Colonic mucosa (tissue), 4 donors: ENCODE measurements at regions of chr12 and their contacts with region 1.

Region 1: DNA sequence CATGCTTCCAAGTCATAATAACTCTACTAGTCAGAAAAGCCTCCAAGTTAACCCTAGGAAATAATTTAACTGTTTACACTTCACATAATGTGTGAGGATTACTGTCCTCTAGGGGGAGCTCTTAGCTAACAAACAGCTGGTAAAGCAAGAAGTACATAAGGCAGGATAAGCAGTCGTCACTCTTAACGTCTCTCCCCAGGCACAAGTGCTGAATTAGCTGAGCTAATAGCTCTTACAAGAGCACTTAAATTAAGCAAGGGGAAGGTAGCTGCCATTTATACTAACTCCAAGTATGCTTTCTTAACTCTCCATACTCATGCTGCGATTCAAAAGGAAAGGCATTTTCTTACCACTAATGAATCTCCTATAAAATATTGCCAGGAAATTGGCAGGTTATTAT is 79.3 kb upstream of the TSPAN11 start:
- DNase-seq: peak; percentile 36
- H3K4me3 ChIP-seq: no peak overlapping the region
- H3K27ac ChIP-seq: no peak overlapping the region
- H3K4me1 ChIP-seq: no peaks in the 10 kb centered on the region
- H3K27me3 ChIP-seq: no peaks in the 10 kb centered on the region
- CTCF ChIP-seq: peak; percentile 60

Region 2: GRCh38 chr12:30965613-30965985 is 118.3 kb after region 1 on chr12:
- intact Hi-C with region 1: no loop called
- DNase-seq: no peak
- H3K4me3 ChIP-seq: no peak overlapping the region
- H3K27ac ChIP-seq: no peak overlapping the region
- H3K4me1 ChIP-seq: no peaks in the 10 kb centered on the region
- H3K27me3 ChIP-seq: no peaks in the 10 kb centered on the region
- CTCF ChIP-seq: no peak

Region 3: DNA sequence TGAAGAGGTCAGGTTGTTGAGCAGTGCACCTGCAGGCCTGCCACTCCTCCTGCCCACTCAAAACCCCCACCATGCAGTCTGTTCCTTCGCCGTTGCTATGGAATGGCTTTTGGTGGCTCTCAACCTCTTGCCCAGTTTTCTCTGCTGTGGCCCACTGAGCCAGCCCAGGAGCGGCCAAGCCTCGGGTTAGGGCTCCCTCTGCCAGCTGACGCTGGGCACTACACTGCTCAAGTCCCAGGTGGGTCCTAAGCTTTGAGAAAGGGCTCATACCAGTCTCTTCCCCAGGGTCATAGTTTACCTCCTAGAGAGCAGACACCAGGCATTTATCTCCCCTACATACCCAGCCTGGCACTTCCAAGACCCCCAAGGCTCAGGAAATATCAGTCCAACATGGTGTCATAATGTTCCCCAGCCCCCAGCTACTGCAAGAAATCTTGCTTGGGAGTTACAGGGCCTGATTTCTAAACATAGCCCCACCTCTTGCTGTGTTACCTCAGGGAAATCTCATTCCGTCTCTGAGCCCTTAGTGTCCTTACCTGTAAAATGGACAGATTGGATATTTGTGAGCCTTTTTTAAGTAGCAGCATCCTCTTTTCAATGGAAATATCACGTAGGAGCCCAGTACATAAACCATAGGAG is 138.7 kb after region 1 on chr12:
- intact Hi-C with region 1: loop called (anchors 5 kb)
- DNase-seq: peak; percentile 32
- H3K4me3 ChIP-seq: no peak overlapping the region
- H3K27ac ChIP-seq: no peak overlapping the region
- H3K4me1 ChIP-seq: no peaks in the 10 kb centered on the region
- H3K27me3 ChIP-seq: no peaks in the 10 kb centered on the region
- CTCF ChIP-seq: peak; percentile 42

Region 4: GRCh38 chr12:31238764-31239387 is 391.6 kb after region 1 on chr12:
- intact Hi-C with region 1: loop called (anchors 5 kb)
- DNase-seq: peak; percentile 79
- H3K4me3 ChIP-seq: no peak overlapping the region
- H3K27ac ChIP-seq: no peak overlapping the region
- H3K4me1 ChIP-seq: no peaks in the 10 kb centered on the region
- H3K27me3 ChIP-seq: no peaks in the 10 kb centered on the region
- CTCF ChIP-seq: peak; percentile 64

Region 5: DNA sequence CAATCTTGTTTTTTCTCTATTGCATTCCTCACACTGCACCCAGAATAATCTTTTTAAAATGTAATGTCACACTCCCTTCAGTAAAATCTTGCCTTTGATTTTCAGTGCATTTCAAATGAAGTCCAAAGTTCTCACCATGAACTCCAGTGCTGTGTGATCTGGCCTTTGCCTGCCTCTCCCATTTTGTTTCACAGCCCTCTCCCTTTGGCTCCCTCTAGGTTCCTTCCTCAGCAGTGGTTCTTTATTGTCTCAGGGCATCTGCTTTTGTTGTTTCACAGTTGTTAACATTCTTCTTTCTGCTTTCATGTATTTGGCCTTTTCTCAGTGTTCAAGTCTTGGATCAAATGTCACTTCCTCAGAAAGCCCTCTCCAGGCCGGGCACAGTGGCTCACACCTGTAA is 966.0 kb after region 1 on chr12:
- intact Hi-C with region 1: no loop called
- DNase-seq: no peak
- H3K4me3 ChIP-seq: no peak overlapping the region
- H3K27ac ChIP-seq: no peak overlapping the region
- H3K4me1 ChIP-seq: no peaks in the 10 kb centered on the region
- H3K27me3 ChIP-seq: no peaks in the 10 kb centered on the region
- CTCF ChIP-seq: no peak